ENCODE measurements at regions of chr17 and their contacts with region 1.

Region 1: GRCh38 chr17:43309505-43310332 is 75.9 kb upstream of the RNU2-1 start:
- DNase-seq: peak in 1 of 9 donors; percentile 18
- ATAC-seq: no peak
- H3K4me3 ChIP-seq: no peak overlapping the region
- H3K4me3 Mint-ChIP-seq: no peak overlapping the region
- H3K27ac ChIP-seq: no peak overlapping the region
- H3K27ac Mint-ChIP-seq: no peak overlapping the region
- H3K4me1 ChIP-seq: no peaks in the 10 kb centered on the region
- H3K4me1 Mint-ChIP-seq: no peaks in the 10 kb centered on the region
- H3K27me3 ChIP-seq: no peaks in the 10 kb centered on the region
- H3K27me3 Mint-ChIP-seq: no peaks in the 10 kb centered on the region

Region 2: GRCh38 chr17:43330876-43331639 is 21.3 kb after region 1 on chr17:
- CTCF ChIA-PET with region 1: interaction called, 36 read pairs
- POLR2A ChIA-PET with region 1: interaction called, 14 read pairs
- intact Hi-C with region 1: no loop called
- DNase-seq: no peak
- ATAC-seq: no peak
- H3K4me3 ChIP-seq: no peak overlapping the region
- H3K4me3 Mint-ChIP-seq: no peak overlapping the region
- H3K27ac ChIP-seq: no peak overlapping the region
- H3K27ac Mint-ChIP-seq: peak overlapping the region in 1 of 9 donors; percentile 41
- H3K4me1 ChIP-seq: peaks cover 4 to 5% of the 10 kb centered on the region in 2 donors
- H3K4me1 Mint-ChIP-seq: peaks cover 7 to 12% (median 9%) of the 10 kb centered on the region in 7 donors
- H3K27me3 ChIP-seq: no peaks in the 10 kb centered on the region
- H3K27me3 Mint-ChIP-seq: peaks cover 0 to 30% (median 16%) of the 10 kb centered on the region in 5 donors